ENCODE measurements at regions of chr13 and their contacts with region 1.

Region 1: GRCh38 chr13:111153279-111153976 is 38.3 kb downstream of the ARHGEF7 start:
- DNase-seq: peak; percentile 96 to 98
- ATAC-seq: peak; percentile 97
- H3K4me3 ChIP-seq: peak overlapping the region; percentile 66 to 87
- H3K27ac ChIP-seq: peak overlapping the region; percentile 71 to 99
- H3K4me1 ChIP-seq: peaks cover 6% of the 10 kb centered on the region in 2 donors
- H3K27me3 ChIP-seq: no peaks in the 10 kb centered on the region

Region 2: GRCh38 chr13:111184458-111185401 is 31.3 kb after region 1 on chr13:
- intact Hi-C with region 1: loop called in 1 of 2 experiments (anchors 5 kb)
- DNase-seq: peak in 1 of 2 donors; percentile 63
- ATAC-seq: peak; percentile 77
- H3K4me3 ChIP-seq: no peak overlapping the region
- H3K27ac ChIP-seq: peak overlapping the region; percentile 87 to 88
- H3K4me1 ChIP-seq: peaks cover 3 to 5% of the 10 kb centered on the region in 2 donors
- H3K27me3 ChIP-seq: no peaks in the 10 kb centered on the region

Region 3: DNA sequence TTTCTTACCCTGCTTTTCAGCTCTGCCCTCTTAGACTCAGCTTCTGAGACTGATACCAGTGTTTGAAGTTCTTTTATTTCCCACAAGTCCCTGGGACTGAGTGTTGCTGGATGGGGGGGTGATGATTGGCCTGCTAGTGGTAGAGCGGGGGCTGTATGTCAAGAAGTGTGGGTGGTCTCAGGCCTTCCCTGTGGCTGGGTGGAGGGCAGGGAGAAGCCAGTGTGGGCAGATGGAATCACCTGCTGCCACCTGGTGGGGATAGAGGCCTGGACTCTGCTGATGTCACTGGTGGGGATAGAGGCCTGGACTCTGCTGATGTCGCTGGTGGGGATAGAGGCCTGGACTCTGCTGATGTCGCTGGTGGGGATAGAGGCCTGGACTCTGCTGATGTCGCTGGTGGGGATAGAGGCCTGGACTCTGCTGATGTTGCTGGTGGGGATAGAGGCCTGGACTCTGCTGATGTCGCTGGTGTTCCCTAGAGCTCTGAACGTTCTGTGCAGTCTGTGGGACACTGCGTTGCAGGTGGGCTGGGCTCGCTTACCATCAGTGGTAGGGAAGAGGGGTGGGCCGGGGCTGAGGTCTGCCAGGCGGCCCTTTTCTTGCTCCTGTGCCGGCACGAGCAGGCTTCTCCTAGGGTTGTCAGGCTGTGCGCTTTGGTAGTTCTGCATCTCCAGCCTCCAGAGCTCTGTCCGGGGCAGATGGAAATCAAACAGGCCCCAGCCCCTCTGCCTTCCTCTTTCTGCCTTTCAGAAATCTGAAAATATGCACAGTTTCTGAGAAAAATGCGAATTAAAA is 62.9 kb after region 1 on chr13:
- intact Hi-C with region 1: loop called (anchors 5 kb)
- DNase-seq: peak in 1 of 2 donors; percentile 82
- ATAC-seq: no peak
- H3K4me3 ChIP-seq: no peak overlapping the region
- H3K27ac ChIP-seq: peak overlapping the region in 1 of 2 donors; percentile 49
- H3K4me1 ChIP-seq: peaks cover 0 to 4% of the 10 kb centered on the region in 2 donors
- H3K27me3 ChIP-seq: no peaks in the 10 kb centered on the region

Measured in aorta (tissue), 5 donors.